GM12878 (cell line): ENCODE measurements at regions of chr6 and their contacts with region 1.

Region 1: GRCh38 chr6:27893059-27893835 is 18.9 kb downstream of the OR2B2 start:
- DNase-seq: peak; percentile 98
- ATAC-seq: peak; percentile 60
- H3K4me3 ChIP-seq: peak overlapping the region; percentile 97
- H3K27ac ChIP-seq: peak overlapping the region; percentile 92
- H3K4me1 ChIP-seq: peaks cover 13% of the 10 kb centered on the region; the same call in 1 of the 2 replicates
- H3K27me3 ChIP-seq: no peaks in the 10 kb centered on the region
- CTCF ChIP-seq: no peak
- EP300 ChIP-seq: no peak
- POLR2A ChIP-seq: peak; percentile 96
- RAD21 ChIP-seq: no peak

Region 2: DNA sequence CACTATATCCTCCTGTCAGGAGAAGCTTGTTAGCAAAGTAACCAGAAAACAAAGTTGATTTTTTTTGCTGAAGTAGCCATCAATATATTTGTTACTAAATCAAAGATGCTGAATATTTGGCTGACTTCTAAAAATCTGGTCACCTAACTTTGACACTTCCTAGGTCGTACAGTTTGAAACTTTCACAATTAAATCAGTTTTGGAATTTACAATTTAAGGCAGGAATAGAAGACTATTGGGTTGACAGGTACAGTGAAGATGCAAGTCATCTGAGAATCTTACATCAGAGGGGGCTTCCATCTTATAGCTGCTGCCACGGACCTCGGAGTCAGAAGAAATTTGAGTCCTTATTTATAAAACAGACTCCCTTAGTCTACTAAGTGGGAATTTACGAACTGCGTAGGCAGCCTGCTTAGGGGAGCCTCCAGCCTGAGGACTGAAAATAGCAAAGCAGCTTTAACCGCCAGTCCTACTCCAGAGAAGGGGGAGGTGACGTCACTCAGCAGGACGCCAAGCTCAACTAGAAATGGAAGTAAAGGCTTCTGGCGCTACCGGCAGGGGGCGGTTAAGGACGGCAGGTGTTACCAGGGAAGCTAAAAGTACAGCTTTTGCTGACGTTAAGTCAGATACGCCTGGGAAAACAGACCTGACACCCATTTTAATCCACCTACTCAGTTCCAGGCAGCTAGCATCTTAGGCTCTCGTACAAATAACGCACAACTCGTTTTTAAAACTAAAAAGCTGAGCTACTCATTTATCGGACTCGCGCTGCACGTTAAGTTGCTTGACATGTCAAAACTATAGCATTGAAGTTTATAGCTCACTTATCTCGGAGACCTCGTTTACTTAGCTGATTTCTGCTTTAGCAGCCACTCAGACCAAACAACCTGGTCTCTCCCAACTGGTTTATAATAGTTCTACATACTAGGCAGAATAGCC is 1867.1 kb before region 1 on chr6:
- CTCF ChIA-PET with region 1: no interaction called
- POLR2A ChIA-PET with region 1: interaction called, 7 read pairs
- RAD21 ChIA-PET with region 1: no interaction called
- SMC1A ChIA-PET with region 1: no interaction called
- in situ Hi-C with region 1: loop called (anchors 5 kb)
- intact Hi-C with region 1: loop called (anchors 2 kb)
- DNase-seq: peak; percentile 89
- ATAC-seq: peak; percentile 53
- H3K4me3 ChIP-seq: peak overlapping the region; percentile 63
- H3K27ac ChIP-seq: peak overlapping the region; percentile 95
- H3K4me1 ChIP-seq: peaks cover 12% of the 10 kb centered on the region
- H3K27me3 ChIP-seq: no peaks in the 10 kb centered on the region
- CTCF ChIP-seq: peak; percentile 82 to 95 (median 94)
- EP300 ChIP-seq: peak in 1 of 2 experiments; percentile 51; a peak in 2 of 4 replicates
- POLR2A ChIP-seq: no peak
- RAD21 ChIP-seq: peak; percentile 54

Region 3: GRCh38 chr6:26270903-26271667 is 1622.2 kb before region 1 on chr6:
- CTCF ChIA-PET with region 1: no interaction called
- POLR2A ChIA-PET with region 1: interaction called, 9 read pairs
- RAD21 ChIA-PET with region 1: no interaction called
- SMC1A ChIA-PET with region 1: no interaction called
- in situ Hi-C with region 1: no loop called
- intact Hi-C with region 1: loop called (anchors 2 kb)
- DNase-seq: peak; percentile 98
- ATAC-seq: peak; percentile 57
- H3K4me3 ChIP-seq: peak overlapping the region; percentile 72
- H3K27ac ChIP-seq: peak overlapping the region; percentile 96
- H3K4me1 ChIP-seq: peaks cover 3% of the 10 kb centered on the region
- H3K27me3 ChIP-seq: no peaks in the 10 kb centered on the region
- CTCF ChIP-seq: no peak
- EP300 ChIP-seq: no peak
- POLR2A ChIP-seq: peak; percentile 95
- RAD21 ChIP-seq: no peak

Region 4: DNA sequence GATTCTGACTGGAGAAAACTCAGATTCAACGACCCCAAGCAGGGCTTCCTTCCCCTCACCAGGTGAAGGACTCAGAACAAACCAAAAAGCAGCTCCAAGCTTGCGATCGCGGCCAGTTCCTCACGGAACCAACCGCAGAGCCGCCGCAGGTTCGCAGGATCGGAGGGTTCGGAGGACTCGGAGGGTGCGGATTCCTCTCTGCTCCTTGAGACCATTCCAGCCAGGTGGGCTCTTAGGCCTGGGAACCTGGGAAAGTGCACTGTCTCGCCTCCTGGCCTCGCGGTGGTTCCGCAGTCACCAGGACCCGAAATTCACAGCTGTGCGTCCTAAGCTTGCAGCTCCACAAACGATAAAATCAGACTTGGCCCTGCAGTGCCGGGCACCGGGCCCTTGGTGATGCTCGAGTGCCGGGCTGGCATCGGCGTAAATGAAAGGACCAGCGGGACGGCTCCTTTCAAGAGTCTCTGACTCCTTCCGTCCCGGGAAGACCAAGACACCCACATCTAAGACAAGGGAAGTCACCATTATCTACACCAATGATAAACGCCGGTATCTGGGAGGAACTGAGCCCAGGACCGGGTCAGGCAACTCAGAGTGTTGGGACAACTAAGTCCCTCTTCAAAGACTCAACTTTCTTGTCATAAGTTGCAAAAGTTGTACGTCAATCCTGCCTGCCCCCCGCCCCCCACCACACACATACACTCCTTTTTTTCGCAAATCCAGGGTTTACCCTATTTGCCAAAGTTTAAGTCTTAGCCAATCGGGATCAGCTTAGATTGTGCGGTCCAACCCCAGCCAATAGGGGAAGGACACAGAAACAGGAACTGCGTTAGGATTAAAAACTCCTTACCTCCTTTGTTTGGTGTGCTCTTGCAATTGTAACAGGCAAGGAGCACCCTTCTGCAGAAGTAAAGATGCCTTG is 715.5 kb before region 1 on chr6:
- CTCF ChIA-PET with region 1: interaction called, 11 read pairs
- POLR2A ChIA-PET with region 1: interaction called, 3 read pairs
- RAD21 ChIA-PET with region 1: interaction called, 7 read pairs
- SMC1A ChIA-PET with region 1: no interaction called
- in situ Hi-C with region 1: no loop called
- intact Hi-C with region 1: no loop called
- DNase-seq: peak; percentile 61
- ATAC-seq: peak; percentile 89
- H3K4me3 ChIP-seq: peak overlapping the region; percentile 89
- H3K27ac ChIP-seq: peak overlapping the region; percentile 93
- H3K4me1 ChIP-seq: no peaks in the 10 kb centered on the region
- H3K27me3 ChIP-seq: no peaks in the 10 kb centered on the region
- CTCF ChIP-seq: peak; percentile 65 to 72 (median 70)
- EP300 ChIP-seq: no peak
- POLR2A ChIP-seq: peak; percentile 56; the same call in 1 of the 2 replicates
- RAD21 ChIP-seq: peak; percentile 54

Region 5: DNA sequence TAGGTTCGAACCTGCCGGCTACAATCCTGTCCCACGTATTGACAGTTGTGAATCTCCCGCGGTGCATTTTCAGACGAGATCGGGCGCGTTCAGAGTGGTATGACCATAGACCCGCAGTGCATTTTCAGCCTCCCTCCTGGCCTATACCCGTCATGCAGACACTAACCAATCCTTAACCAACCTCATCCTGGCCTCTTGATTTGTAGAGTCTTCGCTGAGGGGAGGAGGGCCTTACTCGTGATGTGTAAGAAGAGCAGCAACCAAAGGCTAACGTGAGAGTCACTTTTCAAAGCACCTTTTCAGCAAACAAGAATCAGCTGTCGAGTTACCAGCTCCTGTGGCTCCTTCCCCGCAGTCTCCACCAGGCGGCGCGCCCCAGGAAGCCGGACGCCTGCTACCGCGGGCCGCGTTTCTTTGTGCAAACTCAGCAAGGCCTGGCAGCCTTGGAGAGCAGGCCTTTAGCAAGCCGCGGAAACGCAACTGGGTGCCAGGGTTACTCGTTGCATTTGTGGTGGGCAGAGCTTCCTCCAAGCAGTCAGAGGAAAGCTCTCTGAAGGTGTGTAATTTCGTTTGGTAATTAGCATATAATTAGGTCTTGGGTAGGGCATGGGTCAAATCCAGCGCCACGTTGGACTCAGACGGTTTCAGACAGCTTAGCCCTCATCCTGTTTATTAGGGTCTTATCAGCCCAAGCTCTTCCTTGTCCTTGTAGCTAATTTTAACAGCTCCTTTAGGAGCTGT is 120.8 kb before region 1 on chr6:
- CTCF ChIA-PET with region 1: interaction called, 34 read pairs
- POLR2A ChIA-PET with region 1: interaction called, 3 read pairs
- RAD21 ChIA-PET with region 1: interaction called, 15 read pairs
- SMC1A ChIA-PET with region 1: interaction called, 10 read pairs
- in situ Hi-C with region 1: no loop called
- intact Hi-C with region 1: no loop called
- DNase-seq: no peak
- ATAC-seq: peak; percentile 86
- H3K4me3 ChIP-seq: no peak overlapping the region
- H3K27ac ChIP-seq: no peak overlapping the region
- H3K4me1 ChIP-seq: peaks cover 18% of the 10 kb centered on the region
- H3K27me3 ChIP-seq: no peaks in the 10 kb centered on the region
- CTCF ChIP-seq: peak; percentile 86 to 95 (median 94)
- EP300 ChIP-seq: no peak
- POLR2A ChIP-seq: no peak
- RAD21 ChIP-seq: peak; percentile 69

Region 6: GRCh38 chr6:27838058-27838944 is 54.9 kb before region 1 on chr6:
- CTCF ChIA-PET with region 1: interaction called, 20 read pairs
- POLR2A ChIA-PET with region 1: interaction called, 107 read pairs
- RAD21 ChIA-PET with region 1: interaction called, 74 read pairs
- SMC1A ChIA-PET with region 1: interaction called, 85 read pairs
- in situ Hi-C with region 1: loop called (anchors 5 kb)
- intact Hi-C with region 1: loop called (anchors 2 kb)
- DNase-seq: peak; percentile 100
- ATAC-seq: peak; percentile 81
- H3K4me3 ChIP-seq: peak overlapping the region; percentile 87
- H3K27ac ChIP-seq: peak overlapping the region; percentile 93
- H3K4me1 ChIP-seq: no peaks in the 10 kb centered on the region
- H3K27me3 ChIP-seq: no peaks in the 10 kb centered on the region
- CTCF ChIP-seq: no peak
- EP300 ChIP-seq: 0 out of 4 replicates have a peak, but pooled peaks of 1 of the 2 experiments have one; percentile 3
- POLR2A ChIP-seq: peak; percentile 81
- RAD21 ChIP-seq: no peak